Aorta (tissue), 5 donors: ENCODE measurements at regions of chr1 and their contacts with region 1.

Region 1: GRCh38 chr1:59163268-59164092 is 133.4 kb upstream of the FGGY start:
- DNase-seq: no peak
- ATAC-seq: no peak
- H3K4me3 ChIP-seq: no peak overlapping the region
- H3K27ac ChIP-seq: peak overlapping the region; percentile 67 to 82
- H3K4me1 ChIP-seq: peaks cover 9 to 16% of the 10 kb centered on the region in 2 donors
- H3K27me3 ChIP-seq: no peaks in the 10 kb centered on the region

Region 2: GRCh38 chr1:59204001-59204400 is 40.5 kb after region 1 on chr1:
- intact Hi-C with region 1: loop called in 1 of 2 experiments (anchors 5 kb)
- DNase-seq: peak in 1 of 2 donors; percentile 83
- ATAC-seq: peak; percentile 94
- H3K4me3 ChIP-seq: no peak overlapping the region
- H3K27ac ChIP-seq: peak overlapping the region in 1 of 2 donors; percentile 72
- H3K4me1 ChIP-seq: peaks cover 0 to 7% of the 10 kb centered on the region in 2 donors
- H3K27me3 ChIP-seq: no peaks in the 10 kb centered on the region